ENCODE measurements at regions of chr13 and their contacts with region 1.

Region 1: DNA sequence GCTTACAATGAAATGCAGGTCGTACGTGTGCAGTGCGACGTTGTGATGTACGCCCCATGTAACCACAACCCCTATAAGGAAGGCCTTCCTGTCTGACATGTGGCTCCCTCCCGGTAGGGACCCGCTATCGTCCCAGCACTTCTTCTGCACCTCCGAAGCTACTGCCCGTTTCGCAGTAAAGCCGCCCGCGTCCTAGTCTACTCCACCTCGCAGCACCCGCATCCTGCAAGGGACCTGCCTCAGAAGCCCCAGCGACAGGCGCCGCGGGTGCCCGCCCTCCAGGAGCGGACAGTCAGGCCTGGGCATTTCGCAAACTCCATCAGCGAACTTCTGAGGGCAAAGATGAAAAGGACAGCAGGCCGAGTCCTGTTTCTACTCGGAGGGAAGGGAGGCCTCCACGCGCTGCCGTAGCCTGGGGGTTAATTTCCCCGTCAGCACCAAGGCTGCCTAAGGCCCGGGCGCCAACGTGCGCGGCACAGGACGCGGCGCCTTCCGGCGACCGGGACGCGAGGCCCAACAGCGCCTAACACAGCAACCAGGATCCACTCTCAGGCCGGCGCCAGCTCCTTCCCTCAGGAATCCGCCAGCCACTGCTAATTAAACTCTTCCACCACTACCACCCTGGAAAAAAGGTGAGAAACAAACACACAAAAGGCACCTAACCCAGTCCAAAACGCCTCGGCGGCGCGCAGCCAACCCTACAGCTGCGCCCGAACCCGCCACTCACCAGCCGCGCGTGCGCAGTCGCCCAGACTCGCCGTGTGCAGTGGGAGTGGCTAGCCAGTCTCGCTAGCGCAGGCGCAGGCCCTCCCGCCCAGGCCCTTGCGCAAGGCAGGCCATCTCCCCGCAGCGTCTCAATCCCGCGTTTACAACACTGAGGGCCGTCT is at the start of gene EEF1AKMT1:
- DNase-seq: peak; percentile 98
- ATAC-seq: peak; percentile 92
- H3K4me3 Mint-ChIP-seq: peak within 1 kb of the TSS; percentile 93
- H3K27ac Mint-ChIP-seq: peak within 1 kb of the TSS; percentile 100
- H3K4me1 Mint-ChIP-seq: peaks cover 45% of the 10 kb centered on the region
- H3K27me3 Mint-ChIP-seq: no peaks in the 10 kb centered on the region
- total RNA-seq, gene EEF1AKMT1: 21.0 to 23.9 TPM

Region 2: DNA sequence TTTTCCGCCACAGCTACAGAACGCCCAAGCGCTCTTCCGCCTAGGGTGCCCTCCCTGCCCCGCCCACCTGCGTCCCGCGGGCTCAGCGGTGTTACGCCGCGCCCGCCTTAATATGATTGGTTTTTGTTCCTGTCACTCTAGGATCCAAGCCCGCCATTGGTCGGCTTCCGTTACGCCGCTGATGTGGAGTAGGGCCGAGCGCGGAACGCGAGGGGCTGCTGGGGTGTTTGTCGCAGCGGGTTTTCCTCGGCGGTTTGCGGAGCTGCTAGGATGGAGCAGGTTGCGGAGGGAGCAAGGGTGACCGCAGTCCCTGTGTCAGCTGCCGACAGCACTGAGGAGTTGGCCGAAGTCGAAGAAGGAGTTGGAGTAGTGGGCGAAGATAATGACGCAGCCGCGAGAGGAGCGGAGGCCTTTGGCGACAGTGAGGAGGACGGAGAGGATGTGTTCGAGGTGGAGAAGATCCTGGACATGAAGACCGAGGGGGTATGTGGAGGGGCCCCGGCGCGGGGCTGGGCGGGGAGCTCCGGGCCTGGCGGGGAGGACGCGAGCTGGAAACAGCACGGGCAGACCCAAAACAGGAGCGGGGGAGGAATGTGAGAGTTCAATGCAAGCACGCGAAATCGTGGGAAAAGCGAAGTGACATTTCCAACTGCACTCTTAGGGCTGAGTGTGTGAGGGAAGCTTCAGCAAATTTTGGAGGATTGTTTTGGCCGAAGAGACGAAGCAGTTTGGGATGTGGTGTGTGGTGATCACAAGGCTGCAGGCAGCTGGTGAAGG is 1139.8 kb before region 1 on chr13 and contains the start of gene MPHOSPH8:
- CTCF ChIA-PET with region 1: no interaction called
- POLR2A ChIA-PET with region 1: no interaction called
- intact Hi-C with region 1: loop called in 1 of 2 experiments (anchors 5 kb)
- DNase-seq: peak; percentile 96
- ATAC-seq: peak; percentile 98
- H3K4me3 Mint-ChIP-seq: peak within 1 kb of the TSS; percentile 99
- H3K27ac Mint-ChIP-seq: peak within 1 kb of the TSS; percentile 99
- H3K4me1 Mint-ChIP-seq: peaks cover 27% of the 10 kb centered on the region
- H3K27me3 Mint-ChIP-seq: no peaks in the 10 kb centered on the region
- total RNA-seq, gene MPHOSPH8: 39.1 to 39.8 TPM

Region 3: GRCh38 chr13:20418953-20419352 is 354.5 kb before region 1 on chr13:
- CTCF ChIA-PET with region 1: no interaction called
- POLR2A ChIA-PET with region 1: no interaction called
- intact Hi-C with region 1: loop called in 1 of 2 experiments (anchors 2 kb)
- DNase-seq: no peak
- ATAC-seq: no peak
- H3K4me3 Mint-ChIP-seq: no peak overlapping the region
- H3K27ac Mint-ChIP-seq: peak overlapping the region; percentile 2
- H3K4me1 Mint-ChIP-seq: peaks cover 46% of the 10 kb centered on the region
- H3K27me3 Mint-ChIP-seq: peaks cover 5% of the 10 kb centered on the region

Region 4: GRCh38 chr13:20566898-20567874 is 206.3 kb before region 1 on chr13 and contains the start of gene IFT88:
- CTCF ChIA-PET with region 1: no interaction called
- POLR2A ChIA-PET with region 1: no interaction called
- intact Hi-C with region 1: loop called (anchors 1 to 2 kb)
- DNase-seq: peak; percentile 89
- ATAC-seq: peak; percentile 83
- H3K4me3 Mint-ChIP-seq: peak within 1 kb of the TSS; percentile 81
- H3K27ac Mint-ChIP-seq: peak within 1 kb of the TSS; percentile 80
- H3K4me1 Mint-ChIP-seq: peaks cover 19% of the 10 kb centered on the region
- H3K27me3 Mint-ChIP-seq: no peaks in the 10 kb centered on the region
- total RNA-seq, gene IFT88: 4.7 to 4.8 TPM

Region 5: DNA sequence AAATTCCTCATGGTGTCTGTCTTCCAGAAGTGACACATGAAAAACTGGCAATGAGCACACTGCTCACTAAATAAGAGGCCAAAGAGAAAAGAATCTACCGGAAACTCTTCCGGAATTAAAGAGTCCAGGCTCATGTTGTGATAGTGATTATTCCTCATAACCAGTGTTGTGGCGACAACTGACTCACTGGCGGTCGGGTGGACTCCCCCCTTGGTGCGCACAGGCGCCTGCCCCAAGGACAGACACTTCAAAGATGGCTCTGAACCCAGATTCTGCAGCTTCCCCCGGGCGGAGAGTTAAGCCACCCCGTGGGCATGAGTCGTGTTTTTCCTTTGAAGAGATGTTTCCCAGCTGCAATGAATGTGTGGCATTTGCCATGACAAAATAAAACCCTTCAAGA is 59.7 kb before region 1 on chr13:
- CTCF ChIA-PET with region 1: interaction called, 3 read pairs
- POLR2A ChIA-PET with region 1: no interaction called
- intact Hi-C with region 1: loop called in 1 of 2 experiments (anchors 2 kb)
- DNase-seq: peak; percentile 30
- ATAC-seq: no peak
- H3K4me3 Mint-ChIP-seq: no peak overlapping the region
- H3K27ac Mint-ChIP-seq: no peak overlapping the region
- H3K4me1 Mint-ChIP-seq: peaks cover 12% of the 10 kb centered on the region
- H3K27me3 Mint-ChIP-seq: peaks cover 11% of the 10 kb centered on the region

Region 6: DNA sequence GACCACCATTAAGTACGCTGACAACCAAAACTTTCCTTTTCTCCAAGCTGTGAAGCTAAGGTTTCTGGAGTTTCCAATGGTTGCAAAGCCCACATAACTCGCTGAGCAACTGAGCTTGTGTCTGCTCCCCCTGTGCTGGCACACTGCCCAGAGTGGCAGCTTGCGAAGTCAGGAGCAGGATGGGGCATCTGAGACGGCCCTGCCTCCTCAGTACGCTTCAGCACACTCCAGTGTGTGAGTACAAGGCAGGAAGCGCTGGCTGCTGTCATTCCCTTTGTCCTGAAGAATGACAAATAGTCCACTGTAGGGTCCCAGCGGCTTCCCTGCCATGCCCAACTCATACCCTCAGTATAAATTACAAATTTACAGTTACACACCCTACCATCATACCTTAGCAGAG is 351.4 kb after region 1 on chr13:
- CTCF ChIA-PET with region 1: no interaction called
- POLR2A ChIA-PET with region 1: no interaction called
- intact Hi-C with region 1: no loop called
- DNase-seq: no peak
- ATAC-seq: no peak
- H3K4me3 Mint-ChIP-seq: no peak overlapping the region
- H3K27ac Mint-ChIP-seq: no peak overlapping the region
- H3K4me1 Mint-ChIP-seq: no peaks in the 10 kb centered on the region
- H3K27me3 Mint-ChIP-seq: no peaks in the 10 kb centered on the region

Region 7: GRCh38 chr13:21297914-21298831 is 524.7 kb after region 1 on chr13:
- CTCF ChIA-PET with region 1: no interaction called
- POLR2A ChIA-PET with region 1: no interaction called
- intact Hi-C with region 1: loop called in 1 of 2 experiments (anchors 5 kb)
- DNase-seq: peak; percentile 93
- ATAC-seq: peak; percentile 93
- H3K4me3 Mint-ChIP-seq: peak overlapping the region; percentile 84
- H3K27ac Mint-ChIP-seq: peak overlapping the region; percentile 82
- H3K4me1 Mint-ChIP-seq: peaks cover 25% of the 10 kb centered on the region
- H3K27me3 Mint-ChIP-seq: no peaks in the 10 kb centered on the region